ENCODE measurements at regions of chr12 and their contacts with region 1.

Region 1: GRCh38 chr12:27277846-27278260 is 33.8 kb downstream of the STK38L start:
- DNase-seq: peak; percentile 45
- CTCF ChIP-seq: no peak

Region 2: GRCh38 chr12:27290501-27291168 is 12.8 kb after region 1 on chr12:
- CTCF ChIA-PET with region 1: interaction called, 15 read pairs
- POLR2A ChIA-PET with region 1: no interaction called
- DNase-seq: no peak
- CTCF ChIP-seq: no peak

Region 3: GRCh38 chr12:27355486-27355885 is 77.6 kb after region 1 on chr12:
- CTCF ChIA-PET with region 1: no interaction called
- POLR2A ChIA-PET with region 1: no interaction called
- DNase-seq: no peak
- CTCF ChIP-seq: no peak

Region 4: GRCh38 chr12:27400856-27401354 is 123.1 kb after region 1 on chr12:
- CTCF ChIA-PET with region 1: no interaction called
- POLR2A ChIA-PET with region 1: no interaction called
- DNase-seq: no peak
- CTCF ChIP-seq: no peak

Measured in GM10248 (cell line).